ENCODE measurements at regions of chr16 and their contacts with region 1.

Region 1: GRCh38 chr16:85491058-85491771 is 121.9 kb upstream of the GSE1 start:
- DNase-seq: peak; percentile 52 to 63
- ATAC-seq: peak; percentile 37 to 82; a peak in 3 of 6 replicates
- H3K4me3 ChIP-seq: no peak overlapping the region
- H3K27ac ChIP-seq: peak overlapping the region; percentile 32 to 71; a peak in 5 of 6 replicates
- H3K4me1 ChIP-seq: peaks cover 15% of the 10 kb centered on the region
- CTCF ChIP-seq: peak; percentile 84
- EP300 ChIP-seq: no peak
- POLR2A ChIP-seq: no peak
- RAD21 ChIP-seq: peak; percentile 59 to 69

Region 2: GRCh38 chr16:85461814-85462713 is 29.2 kb before region 1 on chr16:
- CTCF ChIA-PET with region 1: interaction called, 11 read pairs
- POLR2A ChIA-PET with region 1: no interaction called
- DNase-seq: no peak
- ATAC-seq: peak; percentile 27 to 61; a peak in 4 of 6 replicates
- H3K4me3 ChIP-seq: peak overlapping the region; percentile 37
- H3K27ac ChIP-seq: peak overlapping the region; percentile 13 to 87; a peak in 5 of 6 replicates
- H3K4me1 ChIP-seq: peaks cover 43% of the 10 kb centered on the region
- CTCF ChIP-seq: no peak
- EP300 ChIP-seq: no peak
- POLR2A ChIP-seq: no peak
- RAD21 ChIP-seq: no peak

Region 3: GRCh38 chr16:85479972-85480751 is 11.1 kb before region 1 on chr16:
- CTCF ChIA-PET with region 1: interaction called, 96 read pairs
- POLR2A ChIA-PET with region 1: interaction called, 3 read pairs
- DNase-seq: peak; percentile 67 to 94
- ATAC-seq: peak; percentile 89 to 95
- H3K4me3 ChIP-seq: no peak overlapping the region
- H3K27ac ChIP-seq: peak overlapping the region; percentile 18 to 70; a peak in 2 of 6 replicates
- H3K4me1 ChIP-seq: 0 out of 3 replicates have a peak, but pooled peaks cover 3% of the 10 kb centered on the region
- CTCF ChIP-seq: peak; percentile 73
- EP300 ChIP-seq: no peak
- POLR2A ChIP-seq: no peak
- RAD21 ChIP-seq: peak; percentile 65 to 76

Region 4: DNA sequence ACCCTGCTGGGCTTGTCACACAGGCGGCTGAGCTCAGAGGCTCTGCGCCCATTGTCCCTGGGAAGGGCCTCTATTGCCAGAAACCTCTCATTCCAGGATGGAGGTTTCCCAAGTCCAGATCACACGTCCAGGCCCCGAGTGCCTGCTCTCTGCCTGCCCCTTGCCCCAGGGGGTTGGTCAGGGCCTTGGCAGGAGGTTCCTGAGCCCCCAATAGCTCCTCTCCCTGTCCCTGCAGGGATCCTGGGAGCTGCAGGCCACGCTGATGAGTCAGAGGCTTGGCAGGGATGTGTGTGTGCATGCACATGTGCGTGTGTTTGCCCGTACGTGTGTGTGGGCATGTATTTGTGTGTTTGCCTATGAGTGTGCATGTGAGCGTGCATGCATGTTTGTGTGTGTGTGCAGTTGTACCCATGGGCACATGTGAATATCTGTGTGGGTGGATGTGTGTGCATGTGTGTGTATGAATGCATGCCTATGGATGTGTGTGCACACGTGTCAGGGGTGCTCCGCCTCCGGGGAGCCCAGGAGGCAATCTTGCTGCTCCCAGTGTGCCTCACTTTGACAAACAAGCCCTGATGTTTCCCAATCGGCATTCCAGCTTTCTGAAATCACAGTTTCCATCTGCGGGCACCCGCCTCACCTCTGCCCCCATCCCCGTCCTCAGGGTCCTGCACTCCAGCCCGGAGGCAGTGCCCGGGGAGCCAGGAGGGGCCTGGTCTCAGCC is 23.5 kb after region 1 on chr16:
- CTCF ChIA-PET with region 1: interaction called, 17 read pairs
- POLR2A ChIA-PET with region 1: interaction called, 3 read pairs
- DNase-seq: peak; percentile 92 to 95
- ATAC-seq: peak; percentile 85 to 89
- H3K4me3 ChIP-seq: peak overlapping the region; percentile 24; the same call in 2 of the 3 replicates
- H3K27ac ChIP-seq: peak overlapping the region; percentile 95 to 97
- H3K4me1 ChIP-seq: peaks cover 36% of the 10 kb centered on the region
- CTCF ChIP-seq: no peak
- EP300 ChIP-seq: peak; percentile 28 to 78; a peak in 2 of 5 replicates
- POLR2A ChIP-seq: 0 out of 2 replicates have a peak, but pooled peaks have one; percentile 14
- RAD21 ChIP-seq: peak in 1 of 2 experiments; percentile 45; a peak in 2 of 5 replicates

Region 5: DNA sequence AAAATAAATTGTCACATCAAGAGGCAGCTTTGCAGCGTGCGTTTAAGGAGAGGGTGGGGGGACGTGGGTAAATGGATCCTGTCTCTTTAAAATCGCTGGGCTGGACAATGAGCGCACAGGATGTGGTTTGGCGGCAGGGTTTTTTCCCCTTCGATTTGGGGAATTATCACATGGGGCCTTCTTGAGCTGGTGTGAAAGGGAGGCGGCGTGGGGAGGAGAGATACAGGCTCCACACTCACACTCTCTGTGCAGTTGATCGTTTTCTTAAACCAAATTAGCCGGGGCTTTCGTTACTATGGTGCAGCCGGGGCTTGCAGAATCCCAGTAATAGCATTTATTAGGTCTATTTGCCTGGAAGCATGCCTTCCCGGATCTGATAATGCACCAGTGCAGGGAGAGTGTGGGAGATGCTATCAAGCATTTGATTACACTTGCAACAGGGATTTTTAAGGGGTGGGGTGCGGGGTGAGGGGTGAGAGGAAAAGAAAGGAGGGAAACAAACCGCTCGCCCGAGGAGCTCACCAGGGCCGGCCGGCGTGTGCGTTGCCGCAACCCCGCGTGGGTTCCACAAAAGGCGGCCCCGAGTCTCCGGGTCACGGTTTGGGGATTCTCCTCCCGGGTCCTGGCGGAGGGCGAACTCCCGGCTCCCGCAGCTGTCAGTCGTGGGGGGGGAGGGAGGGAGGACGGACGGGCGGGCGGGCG is 63.0 kb after region 1 on chr16:
- CTCF ChIA-PET with region 1: interaction called, 38 read pairs
- POLR2A ChIA-PET with region 1: no interaction called
- DNase-seq: peak; percentile 81 to 88
- ATAC-seq: peak; percentile 54 to 72
- H3K4me3 ChIP-seq: peak overlapping the region; percentile 71
- H3K27ac ChIP-seq: peak overlapping the region; percentile 91 to 99
- H3K4me1 ChIP-seq: peaks cover 23% of the 10 kb centered on the region
- CTCF ChIP-seq: no peak
- EP300 ChIP-seq: no peak
- POLR2A ChIP-seq: 0 out of 2 replicates have a peak, but pooled peaks have one; percentile 29
- RAD21 ChIP-seq: no peak